Panc1 (cell line): ENCODE measurements at regions of chr14 and their contacts with region 1.

Region 1: GRCh38 chr14:93195316-93195999 is 10.3 kb downstream of the LYSET start:
- DNase-seq: no peak
- ATAC-seq: no peak
- H3K4me3 ChIP-seq: no peak overlapping the region
- H3K27ac ChIP-seq: no peak overlapping the region
- H3K4me1 ChIP-seq: no peaks in the 10 kb centered on the region
- H3K27me3 ChIP-seq: no peaks in the 10 kb centered on the region
- CTCF ChIP-seq: no peak

Region 2: GRCh38 chr14:94332063-94332583 is 1136.7 kb after region 1 on chr14:
- CTCF ChIA-PET with region 1: no interaction called
- POLR2A ChIA-PET with region 1: interaction called, 16 read pairs
- in situ Hi-C with region 1: no loop called
- intact Hi-C with region 1: no loop called
- DNase-seq: no peak
- ATAC-seq: no peak
- H3K4me3 ChIP-seq: no peak overlapping the region
- H3K27ac ChIP-seq: no peak overlapping the region
- H3K4me1 ChIP-seq: no peaks in the 10 kb centered on the region
- H3K27me3 ChIP-seq: no peaks in the 10 kb centered on the region
- CTCF ChIP-seq: no peak